ENCODE measurements at regions of chr5 and their contacts with region 1.

Region 1: DNA sequence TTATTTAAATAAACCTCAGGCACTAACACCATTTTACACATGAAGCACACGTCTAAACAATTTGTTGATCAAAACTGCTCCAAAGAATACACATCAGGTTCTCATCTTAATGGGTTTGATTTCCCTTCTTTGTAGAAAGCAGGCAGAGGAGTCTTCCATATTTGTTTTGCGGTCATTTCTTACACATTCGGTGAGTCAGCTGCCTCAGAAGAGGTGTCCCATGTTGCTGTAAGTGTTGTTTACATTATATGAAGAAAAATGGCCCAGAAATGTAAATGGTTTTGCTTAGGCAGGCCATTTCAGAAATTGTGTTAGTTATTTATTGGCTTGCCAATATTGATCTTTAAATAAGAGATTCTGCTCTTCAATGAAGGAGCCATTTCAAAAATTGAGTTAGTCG is 325.8 kb downstream of the TENT4A start:
- DNase-seq: no peak
- H3K4me3 ChIP-seq: no peak overlapping the region
- CTCF ChIP-seq: no peak

Region 2: DNA sequence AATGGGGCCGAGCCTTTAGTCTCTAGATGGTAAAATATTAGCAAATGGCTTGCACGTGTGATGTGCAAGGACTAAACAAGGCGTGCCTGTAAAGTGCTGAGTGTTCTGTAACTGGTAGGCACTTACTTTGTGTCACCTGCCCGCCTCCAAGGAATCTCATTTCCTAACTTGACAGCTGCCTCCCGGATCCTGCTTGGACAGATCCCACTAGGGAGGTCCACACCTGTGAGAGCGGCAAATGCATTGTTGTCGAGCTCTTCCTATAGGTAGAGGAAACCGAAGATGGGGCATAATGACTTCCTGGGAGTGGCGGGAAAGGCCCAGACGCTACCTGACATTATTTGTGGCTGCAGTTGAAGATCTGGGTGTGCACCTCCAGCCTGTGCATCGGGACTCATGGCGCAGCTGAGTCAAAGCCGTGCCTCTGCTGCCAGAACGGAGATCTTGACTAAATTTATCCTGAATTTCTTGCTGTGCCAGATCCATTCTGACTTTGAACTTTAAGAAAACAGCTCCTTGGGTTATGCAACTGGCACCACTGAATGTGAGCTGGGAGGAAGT is 246.1 kb before region 1 on chr5:
- in situ Hi-C with region 1: no loop called
- DNase-seq: no peak
- H3K4me3 ChIP-seq: no peak overlapping the region
- CTCF ChIP-seq: no peak

Region 3: GRCh38 chr5:7094626-7095025 is 55.6 kb after region 1 on chr5:
- in situ Hi-C with region 1: loop called (anchors 5 kb)
- DNase-seq: no peak
- H3K4me3 ChIP-seq: no peak overlapping the region
- CTCF ChIP-seq: no peak

Measured in astrocyte of the cerebellum (primary cell).